ENCODE measurements at regions of chr11 and their contacts with region 1.

Region 1: DNA sequence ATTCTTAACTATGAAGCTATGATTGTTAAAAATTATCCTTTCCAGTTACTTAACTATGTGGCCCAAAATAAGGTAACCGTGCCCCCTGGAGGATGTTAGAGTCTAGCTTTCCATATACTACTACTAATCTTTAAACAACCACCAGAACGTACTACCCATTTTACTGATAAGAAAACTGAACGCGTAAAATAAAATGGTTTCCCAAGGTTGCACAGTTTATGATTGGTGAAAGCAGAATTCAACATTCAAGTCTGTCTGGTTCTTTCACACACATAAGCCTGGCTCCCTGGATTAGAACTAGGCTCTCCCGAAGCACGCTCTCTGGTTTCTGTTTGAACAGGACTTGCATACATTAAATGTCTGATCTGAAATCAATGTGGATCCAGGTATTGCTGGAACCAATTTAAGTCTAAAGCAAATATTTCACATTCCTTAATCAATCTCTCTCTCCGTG is 437.9 kb upstream of the CCDC90B start:
- DNase-seq: peak in 1 of 2 donors; percentile 34
- ATAC-seq: peak; percentile 52 to 88 (median 75)
- H3K4me3 ChIP-seq: peak overlapping the region in 8 of 10 donors; percentile 20 to 55 (median 49)
- H3K27ac ChIP-seq: peak overlapping the region in 1 of 10 donors; percentile 41
- H3K4me1 ChIP-seq: peaks cover 0 to 22% (median 10%) of the 10 kb centered on the region in 9 donors
- H3K27me3 ChIP-seq: no peaks in the 10 kb centered on the region
- CTCF ChIP-seq: peak; percentile 17 to 68 (median 53)

Region 2: GRCh38 chr11:83292709-83293456 is 431.2 kb before region 1 on chr11:
- intact Hi-C with region 1: loop called in 8 of 10 experiments (anchors 2 to 5 kb)
- DNase-seq: peak in 1 of 2 donors; percentile 33
- ATAC-seq: peak in 6 of 8 donors; percentile 51 to 77 (median 58)
- H3K4me3 ChIP-seq: peak overlapping the region in 1 of 10 donors; percentile 20
- H3K27ac ChIP-seq: no peak overlapping the region
- H3K4me1 ChIP-seq: peaks cover 0 to 3% (median 0%) of the 10 kb centered on the region in 9 donors
- H3K27me3 ChIP-seq: no peaks in the 10 kb centered on the region
- CTCF ChIP-seq: peak; percentile 35 to 75 (median 68)

Region 3: DNA sequence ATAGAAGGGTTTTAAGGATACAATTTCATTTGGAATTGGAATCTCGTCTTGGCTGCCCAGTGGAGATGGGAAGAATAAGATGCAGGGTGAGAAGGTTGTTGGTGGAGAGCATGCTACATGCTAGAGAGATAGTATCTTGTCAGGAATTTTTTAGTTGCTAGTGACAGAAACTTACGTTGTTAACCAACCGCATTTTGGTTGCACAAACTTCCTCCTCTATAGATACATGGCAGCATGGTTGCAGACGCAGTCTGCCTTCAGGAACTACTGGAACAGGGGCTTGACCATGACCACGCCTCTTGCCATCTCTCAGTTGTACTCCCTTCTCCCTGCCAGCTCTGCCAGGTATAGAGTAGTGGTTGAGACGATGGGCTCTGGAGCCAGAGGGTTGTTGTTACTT is 424.4 kb before region 1 on chr11:
- intact Hi-C with region 1: loop called in 6 of 10 experiments (anchors 5 kb)
- DNase-seq: no peak
- ATAC-seq: no peak
- H3K4me3 ChIP-seq: no peak overlapping the region
- H3K27ac ChIP-seq: no peak overlapping the region
- H3K4me1 ChIP-seq: no peaks in the 10 kb centered on the region
- H3K27me3 ChIP-seq: no peaks in the 10 kb centered on the region
- CTCF ChIP-seq: no peak

Region 4: GRCh38 chr11:83521647-83522596 is 202.1 kb before region 1 on chr11:
- intact Hi-C with region 1: loop called in 1 of 10 experiments (anchors 10 kb)
- DNase-seq: no peak
- ATAC-seq: no peak
- H3K4me3 ChIP-seq: no peak overlapping the region
- H3K27ac ChIP-seq: no peak overlapping the region
- H3K4me1 ChIP-seq: no peaks in the 10 kb centered on the region
- H3K27me3 ChIP-seq: no peaks in the 10 kb centered on the region
- CTCF ChIP-seq: peak in 3 of 9 donors; percentile 10 to 12 (median 10)

Region 5: DNA sequence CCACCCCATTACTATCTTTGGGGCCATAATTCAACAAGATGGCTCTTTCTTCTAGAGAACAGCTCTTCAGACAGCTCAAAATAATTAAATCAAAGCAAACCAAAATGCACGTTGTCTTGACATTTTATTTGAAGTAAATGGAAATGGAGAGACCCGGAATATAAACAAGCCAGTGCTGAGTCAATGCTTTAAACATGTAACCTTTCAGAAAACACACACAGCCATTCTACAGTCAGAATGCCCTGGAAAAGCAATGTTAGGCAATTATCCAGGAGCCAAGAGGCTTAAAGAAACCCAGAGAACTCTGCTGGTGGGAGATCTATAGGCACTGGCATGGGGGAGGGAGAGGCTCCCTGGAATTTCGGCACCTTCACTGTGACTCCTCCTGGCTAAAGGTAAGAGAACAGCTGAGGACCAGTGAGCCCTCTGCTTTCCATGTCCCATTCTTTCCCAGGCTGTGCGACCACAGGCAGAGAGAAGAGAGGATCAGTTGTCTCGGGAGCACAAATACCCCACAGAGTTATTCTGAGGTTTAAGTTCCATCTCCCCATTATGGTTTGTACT is 183.8 kb before region 1 on chr11:
- intact Hi-C with region 1: no loop called
- DNase-seq: no peak
- ATAC-seq: no peak
- H3K4me3 ChIP-seq: no peak overlapping the region
- H3K27ac ChIP-seq: no peak overlapping the region
- H3K4me1 ChIP-seq: no peaks in the 10 kb centered on the region
- H3K27me3 ChIP-seq: no peaks in the 10 kb centered on the region
- CTCF ChIP-seq: no peak

Region 6: GRCh38 chr11:83611600-83611999 is 112.4 kb before region 1 on chr11:
- intact Hi-C with region 1: no loop called
- DNase-seq: no peak
- ATAC-seq: no peak
- H3K4me3 ChIP-seq: no peak overlapping the region
- H3K27ac ChIP-seq: no peak overlapping the region
- H3K4me1 ChIP-seq: peaks cover 0 to 6% (median 0%) of the 10 kb centered on the region in 9 donors
- H3K27me3 ChIP-seq: no peaks in the 10 kb centered on the region
- CTCF ChIP-seq: no peak